Panc1 (cell line): ENCODE measurements at regions of chr7 and their contacts with region 1.

Region 1: GRCh38 chr7:117505245-117505644 is 25.4 kb downstream of the CFTR start:
- DNase-seq: no peak
- ATAC-seq: no peak
- H3K4me3 ChIP-seq: no peak overlapping the region
- H3K27ac ChIP-seq: no peak overlapping the region
- H3K4me1 ChIP-seq: no peaks in the 10 kb centered on the region
- H3K27me3 ChIP-seq: no peaks in the 10 kb centered on the region; the same call in 1 of the 2 replicates
- CTCF ChIP-seq: no peak

Region 2: GRCh38 chr7:117612642-117613041 is 107.4 kb after region 1 on chr7:
- CTCF ChIA-PET with region 1: no interaction called
- POLR2A ChIA-PET with region 1: no interaction called
- in situ Hi-C with region 1: no loop called
- intact Hi-C with region 1: no loop called
- DNase-seq: no peak
- ATAC-seq: no peak
- H3K4me3 ChIP-seq: no peak overlapping the region
- H3K27ac ChIP-seq: no peak overlapping the region
- H3K4me1 ChIP-seq: no peaks in the 10 kb centered on the region
- H3K27me3 ChIP-seq: no peaks in the 10 kb centered on the region
- CTCF ChIP-seq: no peak

Region 3: DNA sequence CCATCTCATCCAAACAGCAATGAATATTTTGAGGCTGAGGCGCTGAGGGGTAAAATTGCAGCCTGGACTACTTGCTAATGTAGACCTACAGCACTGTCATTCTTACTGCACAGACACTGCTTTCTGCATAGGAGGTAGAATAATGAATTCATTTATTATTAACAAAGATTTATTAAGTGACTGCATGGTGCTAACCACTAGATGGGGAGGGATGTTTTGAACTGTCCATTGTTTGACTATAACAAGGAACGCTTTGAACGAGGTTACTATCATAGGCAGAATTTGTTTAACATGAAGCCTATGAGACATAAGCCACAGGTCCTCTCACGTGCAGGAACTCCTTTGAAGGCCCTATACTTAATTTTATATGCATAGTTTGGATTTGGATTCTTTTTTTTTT is 118.4 kb after region 1 on chr7:
- CTCF ChIA-PET with region 1: no interaction called
- POLR2A ChIA-PET with region 1: interaction called, 10 read pairs
- in situ Hi-C with region 1: no loop called
- intact Hi-C with region 1: no loop called
- DNase-seq: no peak
- ATAC-seq: no peak
- H3K4me3 ChIP-seq: no peak overlapping the region
- H3K27ac ChIP-seq: no peak overlapping the region
- H3K4me1 ChIP-seq: no peaks in the 10 kb centered on the region
- H3K27me3 ChIP-seq: no peaks in the 10 kb centered on the region
- CTCF ChIP-seq: no peak